Ascending aorta (tissue), 2 donors: ENCODE measurements at regions of chrX and their contacts with region 1.

Region 1: GRCh38 chrX:1391707-1392375 is at the start of gene SLC25A6:
- DNase-seq: peak; percentile 91 to 99
- H3K4me3 ChIP-seq: peak within 1 kb of the TSS; percentile 99 to 100
- H3K27ac ChIP-seq: peak within 1 kb of the TSS; percentile 98 to 99
- H3K4me1 ChIP-seq: peaks cover 7 to 11% of the 10 kb centered on the region in 2 donors
- H3K27me3 ChIP-seq: no peaks in the 10 kb centered on the region
- CTCF ChIP-seq: peak in 1 of 3 experiments; percentile 41
- total RNA-seq, gene SLC25A6: 535 TPM

Region 2: GRCh38 chrX:318739-319578 is 1072.9 kb before region 1 on chrX and contains the start of gene GTPBP6:
- intact Hi-C with region 1: loop called (anchors 1 kb)
- DNase-seq: peak; percentile 99 to 100
- H3K4me3 ChIP-seq: peak within 1 kb of the TSS; percentile 74 to 98
- H3K27ac ChIP-seq: peak within 1 kb of the TSS; percentile 91 to 96
- H3K4me1 ChIP-seq: peaks cover 0 to 16% of the 10 kb centered on the region in 2 donors
- H3K27me3 ChIP-seq: no peaks in the 10 kb centered on the region
- CTCF ChIP-seq: peak in 2 of 3 experiments; percentile 18 to 21
- total RNA-seq, gene GTPBP6: 56.2 TPM

Region 3: GRCh38 chrX:1453951-1454785 is 62.3 kb after region 1 on chrX:
- intact Hi-C with region 1: loop called (anchors 1 kb)
- DNase-seq: peak; percentile 46 to 91
- H3K4me3 ChIP-seq: peak overlapping the region; percentile 89
- H3K27ac ChIP-seq: peak overlapping the region; percentile 37 to 95
- H3K4me1 ChIP-seq: peaks cover 12 to 13% of the 10 kb centered on the region in 2 donors
- H3K27me3 ChIP-seq: no peaks in the 10 kb centered on the region
- CTCF ChIP-seq: peak; percentile 93 to 98 (median 98)

Region 4: DNA sequence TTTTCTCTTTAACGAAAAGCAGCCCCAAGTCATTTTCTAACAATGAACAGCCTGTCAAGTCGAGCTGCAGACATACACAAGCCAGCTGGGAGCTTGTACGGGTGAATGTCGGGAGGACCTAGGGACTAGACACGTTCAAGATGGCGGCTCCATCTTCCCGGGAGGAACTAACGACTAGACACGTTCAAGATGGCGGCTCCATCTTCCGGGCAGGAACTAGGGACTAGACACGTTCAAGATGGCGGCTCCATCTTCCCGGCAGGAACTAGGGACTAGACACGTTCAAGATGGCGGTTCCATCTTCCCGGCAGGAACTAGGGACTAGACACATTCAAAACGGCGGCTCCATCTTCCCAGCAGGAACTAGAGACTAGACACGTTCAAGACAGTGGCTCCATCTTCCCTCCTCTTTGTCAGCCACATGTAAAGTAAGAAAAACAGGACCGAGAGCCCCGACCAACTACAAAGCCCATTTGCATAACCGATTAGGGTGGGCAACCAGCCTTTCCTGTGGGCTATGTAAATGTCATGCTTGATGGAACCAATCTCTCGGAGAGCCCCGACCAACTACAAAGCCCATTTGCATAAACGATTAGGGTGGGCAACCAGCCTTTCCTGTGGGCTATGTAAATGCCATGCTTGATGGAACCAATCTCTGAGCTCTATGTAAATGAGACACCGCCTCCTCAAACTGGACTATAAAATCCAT is 933.4 kb after region 1 on chrX:
- intact Hi-C with region 1: loop called (anchors 5 kb)
- DNase-seq: peak; percentile 46 to 90
- H3K4me3 ChIP-seq: peak overlapping the region; percentile 61 to 67
- H3K27ac ChIP-seq: peak overlapping the region; percentile 71 to 78
- H3K4me1 ChIP-seq: no peaks in the 10 kb centered on the region
- H3K27me3 ChIP-seq: no peaks in the 10 kb centered on the region
- CTCF ChIP-seq: no peak

Region 5: DNA sequence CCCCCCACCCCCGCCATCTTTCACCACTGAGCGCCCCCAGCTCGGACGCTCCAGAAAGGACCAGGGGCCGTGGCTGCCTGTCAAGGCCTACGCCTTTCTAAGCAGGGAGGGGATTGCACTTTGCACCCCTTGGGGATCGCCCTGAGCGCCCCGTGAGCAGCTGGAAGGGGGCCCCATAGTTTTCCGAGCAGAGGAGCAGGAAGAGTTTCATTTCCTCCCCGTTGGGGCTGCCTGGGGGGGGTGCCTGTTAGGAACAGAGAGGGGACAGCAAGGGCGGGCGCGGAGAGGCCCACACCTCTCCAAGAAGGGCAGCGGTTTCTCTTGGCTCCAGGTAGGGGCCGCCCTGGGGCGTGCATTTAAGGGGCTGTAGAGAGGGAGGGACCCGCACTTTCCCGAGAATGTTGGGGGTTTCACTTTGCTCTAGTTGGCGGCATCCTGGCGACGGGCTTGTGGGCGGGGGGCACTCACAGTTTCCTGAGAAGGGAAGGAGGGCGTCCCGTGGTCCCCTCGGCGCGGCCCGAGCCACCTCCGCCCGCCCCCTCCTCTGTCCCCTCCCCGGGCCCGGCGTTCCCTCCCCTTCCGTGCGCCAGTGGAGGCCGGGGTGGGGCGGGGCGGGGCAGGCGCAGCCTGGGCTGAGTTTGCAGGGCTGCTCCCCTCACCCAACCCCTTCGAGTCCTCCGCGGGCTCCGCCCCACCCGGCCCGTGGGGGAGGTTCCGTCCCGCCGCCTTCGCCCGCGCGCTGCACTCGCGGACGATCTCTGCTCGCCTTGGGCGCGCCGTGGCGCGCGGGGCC is 1217.0 kb after region 1 on chrX:
- intact Hi-C with region 1: loop called (anchors 2 kb)
- DNase-seq: peak; percentile 40 to 91
- H3K4me3 ChIP-seq: peak overlapping the region; percentile 77 to 94
- H3K27ac ChIP-seq: peak overlapping the region; percentile 67 to 70
- H3K4me1 ChIP-seq: peaks cover 0 to 8% of the 10 kb centered on the region in 2 donors
- H3K27me3 ChIP-seq: no peaks in the 10 kb centered on the region
- CTCF ChIP-seq: no peak

Region 6: GRCh38 chrX:2928191-2928763 is 1536.4 kb after region 1 on chrX:
- intact Hi-C with region 1: loop called (anchors 2 kb)
- DNase-seq: peak in 1 of 2 donors; percentile 24
- H3K4me3 ChIP-seq: peak overlapping the region; percentile 83 to 92
- H3K27ac ChIP-seq: peak overlapping the region; percentile 97 to 99
- H3K4me1 ChIP-seq: no peaks in the 10 kb centered on the region
- H3K27me3 ChIP-seq: no peaks in the 10 kb centered on the region
- CTCF ChIP-seq: no peak